Activated CD4-positive, alpha-beta memory T cell treated with anti-CD3 and anti-CD28 coated beads for 36 hours (primary cell): ENCODE measurements at regions of chr5 and their contacts with region 1.

Region 1: GRCh38 chr5:110086658-110087388 is 397.1 kb downstream of the MAN2A1 start:
- DNase-seq: peak; percentile 75
- H3K4me3 Mint-ChIP-seq: peak overlapping the region; percentile 23
- H3K27ac Mint-ChIP-seq: peak overlapping the region; percentile 83
- H3K4me1 Mint-ChIP-seq: peaks cover 31% of the 10 kb centered on the region
- H3K27me3 Mint-ChIP-seq: no peaks in the 10 kb centered on the region

Region 2: GRCh38 chr5:108748401-108749127 is 1338.3 kb before region 1 on chr5:
- CTCF ChIA-PET with region 1: no interaction called
- POLR2A ChIA-PET with region 1: no interaction called
- intact Hi-C with region 1: loop called (anchors 10 kb)
- DNase-seq: peak; percentile 98
- H3K4me3 Mint-ChIP-seq: peak overlapping the region; percentile 94
- H3K27ac Mint-ChIP-seq: peak overlapping the region; percentile 88
- H3K4me1 Mint-ChIP-seq: peaks cover 9% of the 10 kb centered on the region
- H3K27me3 Mint-ChIP-seq: peaks cover 3% of the 10 kb centered on the region

Region 3: DNA sequence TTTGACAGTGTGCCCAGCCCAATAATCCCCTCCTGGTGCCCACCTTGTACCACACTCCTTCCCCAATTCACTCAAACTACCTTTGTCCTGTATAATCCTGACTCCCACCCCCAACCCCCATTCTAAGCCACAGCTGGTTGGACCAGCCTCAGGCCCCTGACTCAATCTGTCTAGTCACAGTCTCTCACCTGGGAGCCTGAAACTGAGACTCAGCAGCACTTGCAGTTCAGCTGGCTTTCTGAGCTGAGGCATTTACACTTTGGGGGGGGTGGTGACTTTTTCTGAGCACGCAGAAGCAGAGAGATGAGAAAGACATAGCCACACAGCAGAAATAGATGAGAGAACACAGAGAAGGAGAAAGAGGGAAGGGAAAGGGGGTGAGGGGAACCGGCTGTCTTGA is 149.8 kb before region 1 on chr5:
- CTCF ChIA-PET with region 1: no interaction called
- POLR2A ChIA-PET with region 1: no interaction called
- intact Hi-C with region 1: loop called (anchors 2 kb)
- DNase-seq: peak; percentile 69
- H3K4me3 Mint-ChIP-seq: no peak overlapping the region
- H3K27ac Mint-ChIP-seq: peak overlapping the region; percentile 57
- H3K4me1 Mint-ChIP-seq: peaks cover 17% of the 10 kb centered on the region
- H3K27me3 Mint-ChIP-seq: peaks cover 1% of the 10 kb centered on the region

Region 4: DNA sequence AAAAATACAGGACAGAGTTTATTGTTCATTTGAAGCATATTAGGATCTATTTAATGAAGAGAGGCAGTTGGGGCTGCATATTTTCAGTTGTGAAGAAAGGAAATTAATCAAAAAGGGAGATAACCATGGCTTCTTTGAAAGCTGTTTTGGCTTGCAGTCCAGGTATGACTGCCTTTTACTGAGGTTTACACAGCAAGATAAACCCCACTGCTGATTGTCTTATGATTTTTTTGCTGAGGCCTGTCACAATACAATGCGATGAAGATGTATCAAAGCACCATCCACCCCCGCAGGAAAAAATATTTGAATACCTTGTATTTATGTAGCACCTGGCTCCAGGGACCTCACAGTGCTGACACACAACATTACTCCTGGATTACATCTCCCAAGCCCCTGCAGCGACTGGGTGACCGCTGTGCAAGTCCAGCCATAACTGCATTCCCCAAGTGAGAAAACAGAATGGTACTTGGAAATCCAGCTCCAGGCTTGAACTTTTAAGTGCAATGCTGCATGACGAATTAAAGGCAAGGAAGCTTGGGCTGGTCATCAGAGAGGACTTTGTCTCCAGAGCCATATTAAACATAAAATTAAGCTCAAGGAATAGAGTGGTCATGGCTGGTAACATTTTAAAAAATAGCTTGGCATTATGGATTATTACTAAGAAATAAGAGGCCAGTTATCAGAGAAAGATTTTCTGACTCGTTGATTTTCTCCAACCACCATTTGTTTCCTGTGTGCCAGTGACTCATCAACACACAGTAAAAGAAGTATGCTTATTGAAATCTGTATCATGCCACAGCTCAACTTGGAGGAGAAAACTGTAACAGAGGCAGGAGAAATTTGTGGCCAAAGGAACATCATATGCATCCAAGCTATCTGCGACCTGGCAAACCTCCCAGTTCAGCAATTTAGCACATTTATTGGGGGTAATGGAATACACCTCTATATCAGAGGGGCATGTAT is 22.9 kb before region 1 on chr5:
- CTCF ChIA-PET with region 1: no interaction called
- POLR2A ChIA-PET with region 1: no interaction called
- intact Hi-C with region 1: loop called (anchors 1 kb)
- DNase-seq: no peak
- H3K4me3 Mint-ChIP-seq: no peak overlapping the region
- H3K27ac Mint-ChIP-seq: no peak overlapping the region
- H3K4me1 Mint-ChIP-seq: peaks cover 23% of the 10 kb centered on the region
- H3K27me3 Mint-ChIP-seq: no peaks in the 10 kb centered on the region

Region 5: GRCh38 chr5:111254613-111255012 is 1167.8 kb after region 1 on chr5:
- CTCF ChIA-PET with region 1: no interaction called
- POLR2A ChIA-PET with region 1: no interaction called
- intact Hi-C with region 1: loop called (anchors 5 kb)
- DNase-seq: peak; percentile 89
- H3K4me3 Mint-ChIP-seq: peak overlapping the region; percentile 57
- H3K27ac Mint-ChIP-seq: peak overlapping the region; percentile 85
- H3K4me1 Mint-ChIP-seq: peaks cover 92% of the 10 kb centered on the region
- H3K27me3 Mint-ChIP-seq: no peaks in the 10 kb centered on the region